ENCODE measurements at regions of chr2 and their contacts with region 1.

Region 1: GRCh38 chr2:58204195-58204959 is 36.7 kb downstream of the FANCL start:
- DNase-seq: no peak
- H3K4me3 ChIP-seq: no peak overlapping the region
- H3K27ac ChIP-seq: no peak overlapping the region
- H3K4me1 ChIP-seq: no peaks in the 10 kb centered on the region
- H3K27me3 ChIP-seq: no peaks in the 10 kb centered on the region
- CTCF ChIP-seq: no peak

Region 2: DNA sequence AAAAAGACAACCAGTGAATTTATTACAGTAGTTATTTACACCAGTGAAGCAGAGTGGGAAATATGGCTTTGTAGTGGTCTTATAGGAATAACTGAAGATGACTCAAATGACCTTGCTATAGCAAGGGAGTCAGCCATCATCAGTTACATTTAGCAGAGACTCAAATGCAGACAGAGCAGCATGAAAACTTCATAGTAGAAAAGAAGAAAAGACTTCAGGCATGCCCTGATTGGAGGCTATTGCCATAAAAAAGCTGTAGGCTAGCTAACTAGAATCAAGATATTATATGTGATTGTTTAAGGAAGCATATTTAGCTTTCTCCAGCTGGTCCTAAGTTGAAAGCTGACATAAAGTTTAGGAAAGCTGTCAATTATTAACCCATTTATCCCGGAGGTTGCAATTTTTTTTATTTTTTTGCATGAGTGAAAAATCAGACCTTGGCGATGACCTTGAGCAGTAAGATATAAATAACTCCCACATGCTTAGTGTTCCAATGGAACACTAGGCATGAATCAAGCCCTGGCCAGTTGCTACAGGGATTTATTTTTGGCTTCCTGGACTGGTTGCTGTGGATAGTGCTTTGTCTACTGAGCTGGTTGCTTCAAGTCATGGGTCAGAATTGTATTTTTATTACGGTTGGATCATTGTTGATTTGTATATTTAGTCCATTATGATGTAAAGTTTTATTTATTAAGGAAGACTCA is 833.3 kb before region 1 on chr2:
- CTCF ChIA-PET with region 1: no interaction called
- dilution Hi-C with region 1: no loop called
- in situ Hi-C with region 1: no loop called
- intact Hi-C with region 1: no loop called
- DNase-seq: no peak
- H3K4me3 ChIP-seq: no peak overlapping the region
- H3K27ac ChIP-seq: no peak overlapping the region
- H3K4me1 ChIP-seq: peaks cover 23% of the 10 kb centered on the region
- H3K27me3 ChIP-seq: no peaks in the 10 kb centered on the region
- CTCF ChIP-seq: no peak

Region 3: DNA sequence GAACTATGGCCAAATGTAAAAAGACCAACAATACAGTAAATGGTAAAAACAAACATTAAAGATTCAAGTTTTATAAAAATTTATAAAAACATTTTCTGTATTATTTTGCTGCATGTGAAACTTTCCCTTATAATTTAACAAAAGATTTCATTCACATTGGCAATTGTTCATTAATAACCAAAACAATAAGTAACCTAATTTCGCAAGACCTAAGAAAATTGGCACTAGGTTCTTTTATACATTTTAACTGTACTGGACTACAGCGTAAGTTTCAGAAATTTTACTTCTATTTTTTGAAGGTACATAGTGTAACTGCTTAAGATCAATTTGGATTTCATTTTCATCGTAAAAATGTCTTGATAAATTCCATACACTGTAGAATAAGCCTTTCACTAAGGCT is 40.5 kb before region 1 on chr2:
- CTCF ChIA-PET with region 1: no interaction called
- dilution Hi-C with region 1: loop called (anchors 5 kb)
- in situ Hi-C with region 1: no loop called
- intact Hi-C with region 1: no loop called
- DNase-seq: no peak
- H3K4me3 ChIP-seq: no peak overlapping the region
- H3K27ac ChIP-seq: no peak overlapping the region
- H3K4me1 ChIP-seq: no peaks in the 10 kb centered on the region
- H3K27me3 ChIP-seq: no peaks in the 10 kb centered on the region
- CTCF ChIP-seq: no peak

Measured in mammary epithelial cell (primary cell).